Right ventricle myocardium inferior (tissue), 1 donor: ENCODE measurements at regions of chr5 and their contacts with region 1.

Region 1: GRCh38 chr5:32489791-32490582 is 45.4 kb upstream of the ZFR start:
- DNase-seq: peak; percentile 83
- ATAC-seq: peak; percentile 63

Region 2: GRCh38 chr5:32004404-32004803 is 485.6 kb before region 1 on chr5:
- intact Hi-C with region 1: no loop called
- DNase-seq: no peak
- ATAC-seq: no peak

Region 3: GRCh38 chr5:32585446-32586275 is 95.7 kb after region 1 on chr5 and contains the start of gene SUB1:
- intact Hi-C with region 1: loop called (anchors 1 kb)
- DNase-seq: peak; percentile 98
- ATAC-seq: peak; percentile 97
- total RNA-seq, gene SUB1: 187 TPM

Region 4: GRCh38 chr5:32613050-32613672 is 123.2 kb after region 1 on chr5:
- intact Hi-C with region 1: loop called (anchors 1 kb)
- DNase-seq: peak; percentile 86
- ATAC-seq: peak; percentile 72